K562 (cell line): ENCODE measurements at regions of chr7 and their contacts with region 1.

Region 1: GRCh38 chr7:130242198-130243014 is 24.3 kb upstream of the CPA2 start:
- DNase-seq: peak; percentile 66 to 81 (median 76)
- ATAC-seq: peak; percentile 100
- H3K4me3 ChIP-seq: no peak overlapping the region
- H3K27ac ChIP-seq: no peak overlapping the region
- H3K4me1 ChIP-seq: peaks cover 0 to 10% of the 10 kb centered on the region in 2 experiments; a peak in 2 of 5 replicates
- H3K27me3 ChIP-seq: 0 out of 5 replicates have a peak, but pooled peaks cover 0 to 3% of the 10 kb centered on the region in 2 experiments
- CTCF ChIP-seq: peak; percentile 94 to 97 (median 96)
- EP300 ChIP-seq: peak; percentile 48; the same call in 1 of the 2 replicates
- POLR2A ChIP-seq: no peak
- RAD21 ChIP-seq: peak; percentile 73 to 96

Region 2: DNA sequence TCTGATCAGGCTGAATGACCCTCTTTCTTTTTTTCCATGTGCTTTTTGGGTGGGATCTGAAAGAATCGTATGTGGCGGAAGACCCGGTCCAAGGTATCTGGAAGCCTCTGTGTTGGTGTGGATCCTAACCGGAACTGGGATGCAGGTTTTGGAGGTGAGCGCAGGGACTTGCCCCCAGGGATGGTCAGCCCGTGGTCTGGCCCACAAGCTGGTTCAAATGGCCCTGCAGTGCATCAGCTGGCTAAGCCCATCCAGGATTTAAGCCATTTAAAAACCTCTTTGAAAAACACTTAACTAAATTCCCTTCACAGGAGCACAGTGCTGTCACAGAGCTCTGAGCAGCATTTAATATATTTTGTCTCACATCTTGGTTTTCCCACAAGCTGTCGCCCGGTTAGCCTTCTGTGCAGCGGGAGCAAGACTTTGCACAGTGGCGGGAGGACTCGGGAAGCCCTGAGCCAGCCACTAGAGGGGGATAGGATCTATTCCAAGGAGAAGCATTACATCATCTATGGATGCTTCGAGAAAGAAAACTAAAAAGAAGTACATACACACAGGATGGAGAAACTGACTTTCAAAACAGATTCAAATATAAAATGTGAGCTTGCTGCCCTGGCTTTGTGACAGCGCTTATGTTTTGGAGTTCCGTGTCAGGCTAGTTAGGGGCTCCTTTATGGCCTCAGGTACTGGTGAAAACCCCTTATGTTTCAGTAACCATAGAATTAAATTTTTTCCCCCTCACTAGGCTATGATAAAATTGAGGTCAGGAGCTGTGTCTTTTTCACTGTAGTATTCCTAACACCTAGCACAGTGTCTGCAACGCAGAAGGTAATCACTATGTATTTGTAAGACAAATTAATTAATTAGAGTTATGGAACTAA is 35.6 kb after region 1 on chr7:
- CTCF ChIA-PET with region 1: no interaction called
- POLR2A ChIA-PET with region 1: no interaction called
- in situ Hi-C with region 1: no loop called
- intact Hi-C with region 1: no loop called
- DNase-seq: peak in 3 of 4 experiments; percentile 46 to 69 (median 59)
- ATAC-seq: peak; percentile 96
- H3K4me3 ChIP-seq: no peak overlapping the region
- H3K27ac ChIP-seq: no peak overlapping the region
- H3K4me1 ChIP-seq: peaks cover 1 to 3% of the 10 kb centered on the region in 2 experiments; a peak in 2 of 5 replicates
- H3K27me3 ChIP-seq: peaks cover 24 to 26% of the 10 kb centered on the region in 2 experiments
- CTCF ChIP-seq: peak; percentile 64 to 84 (median 76)
- EP300 ChIP-seq: no peak
- POLR2A ChIP-seq: no peak
- RAD21 ChIP-seq: peak; percentile 58 to 82

Region 3: GRCh38 chr7:130352221-130353075 is 110.0 kb after region 1 on chr7:
- CTCF ChIA-PET with region 1: no interaction called
- POLR2A ChIA-PET with region 1: no interaction called
- in situ Hi-C with region 1: no loop called
- intact Hi-C with region 1: no loop called
- DNase-seq: no peak
- ATAC-seq: no peak
- H3K4me3 ChIP-seq: no peak overlapping the region
- H3K27ac ChIP-seq: no peak overlapping the region
- H3K4me1 ChIP-seq: peaks cover 0 to 2% of the 10 kb centered on the region in 2 experiments; a peak in 1 of 5 replicates
- H3K27me3 ChIP-seq: peaks cover 38 to 74% of the 10 kb centered on the region in 2 experiments
- CTCF ChIP-seq: no peak
- EP300 ChIP-seq: no peak
- POLR2A ChIP-seq: no peak
- RAD21 ChIP-seq: no peak

Region 4: GRCh38 chr7:130486114-130486958 is 243.9 kb after region 1 on chr7:
- CTCF ChIA-PET with region 1: no interaction called
- POLR2A ChIA-PET with region 1: no interaction called
- in situ Hi-C with region 1: no loop called
- intact Hi-C with region 1: loop called (anchors 10 kb)
- DNase-seq: peak; percentile 31 to 58 (median 46)
- ATAC-seq: peak; percentile 81
- H3K4me3 ChIP-seq: no peak overlapping the region
- H3K27ac ChIP-seq: no peak overlapping the region
- H3K4me1 ChIP-seq: peaks cover 0 to 13% of the 10 kb centered on the region in 2 experiments; a peak in 3 of 5 replicates
- H3K27me3 ChIP-seq: peaks cover 17 to 52% of the 10 kb centered on the region in 2 experiments; a peak in 4 of 5 replicates
- CTCF ChIP-seq: peak; percentile 73 to 85 (median 80)
- EP300 ChIP-seq: no peak
- POLR2A ChIP-seq: no peak
- RAD21 ChIP-seq: peak; percentile 28 to 73; a peak in 3 of 4 replicates

Region 5: GRCh38 chr7:130566898-130567280 is 324.5 kb after region 1 on chr7:
- CTCF ChIA-PET with region 1: no interaction called
- POLR2A ChIA-PET with region 1: no interaction called
- in situ Hi-C with region 1: no loop called
- intact Hi-C with region 1: no loop called
- DNase-seq: no peak
- ATAC-seq: no peak
- H3K4me3 ChIP-seq: no peak overlapping the region
- H3K27ac ChIP-seq: no peak overlapping the region
- H3K4me1 ChIP-seq: peaks cover 0 to 3% of the 10 kb centered on the region in 2 experiments; a peak in 1 of 5 replicates
- H3K27me3 ChIP-seq: no peaks in the 10 kb centered on the region
- CTCF ChIP-seq: no peak
- EP300 ChIP-seq: no peak
- POLR2A ChIP-seq: no peak
- RAD21 ChIP-seq: no peak

Region 6: DNA sequence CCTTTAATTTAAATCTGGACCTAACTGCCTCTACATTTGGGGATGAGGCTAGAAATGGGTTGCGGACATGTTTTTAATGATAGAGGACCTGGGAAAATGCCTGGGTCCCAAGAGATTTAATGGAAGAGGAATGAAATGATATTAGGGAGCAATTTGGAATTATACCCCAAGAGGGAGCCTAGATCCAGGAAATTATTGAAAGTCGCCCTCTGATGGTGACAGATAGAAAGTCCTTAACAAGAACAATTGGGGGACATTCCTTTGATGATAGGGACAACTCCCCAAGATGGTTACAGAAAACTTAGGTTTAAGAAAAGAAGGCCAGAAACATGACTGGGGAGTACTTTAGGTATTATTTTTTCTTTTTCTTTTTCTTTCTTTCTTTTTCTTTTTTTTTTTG is 453.4 kb after region 1 on chr7:
- CTCF ChIA-PET with region 1: no interaction called
- POLR2A ChIA-PET with region 1: interaction called, 3 read pairs
- in situ Hi-C with region 1: no loop called
- intact Hi-C with region 1: loop called (anchors 5 kb)
- DNase-seq: peak; percentile 36 to 62 (median 50)
- ATAC-seq: peak; percentile 80
- H3K4me3 ChIP-seq: no peak overlapping the region
- H3K27ac ChIP-seq: no peak overlapping the region
- H3K4me1 ChIP-seq: no peaks in the 10 kb centered on the region
- H3K27me3 ChIP-seq: peaks cover 0 to 4% of the 10 kb centered on the region in 2 experiments; a peak in 2 of 5 replicates
- CTCF ChIP-seq: peak; percentile 76 to 99 (median 99)
- EP300 ChIP-seq: no peak
- POLR2A ChIP-seq: no peak
- RAD21 ChIP-seq: peak; percentile 61 to 77

Region 7: DNA sequence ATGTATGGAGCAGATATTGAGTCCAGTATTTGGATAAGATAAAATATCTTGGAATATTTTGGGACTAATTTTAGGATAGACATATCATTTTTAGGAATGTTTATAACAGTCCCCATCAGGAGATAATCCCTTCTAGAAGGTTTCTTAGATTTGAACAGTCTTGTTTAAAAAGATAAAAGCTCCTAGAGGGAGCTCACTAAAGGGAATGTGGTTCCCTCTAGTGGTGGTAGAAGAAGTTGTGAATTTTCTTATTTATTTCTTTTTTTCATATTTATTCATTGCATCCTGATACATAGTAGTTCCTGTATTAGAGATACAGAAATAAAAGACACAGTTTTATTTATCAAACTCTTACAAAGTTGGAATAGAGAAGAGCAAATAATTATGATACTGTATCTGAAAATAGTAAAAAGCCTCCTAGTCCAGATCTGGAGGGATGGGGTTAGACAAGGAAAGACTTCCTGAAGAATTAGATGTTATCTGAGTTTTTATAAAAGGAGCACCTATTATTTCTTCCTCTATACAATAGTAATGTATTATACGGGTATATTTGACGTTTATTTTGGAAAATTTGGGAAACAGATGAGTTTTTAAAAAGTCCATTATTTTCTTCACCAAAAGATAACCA is 516.1 kb after region 1 on chr7:
- CTCF ChIA-PET with region 1: no interaction called
- POLR2A ChIA-PET with region 1: no interaction called
- in situ Hi-C with region 1: no loop called
- intact Hi-C with region 1: loop called (anchors 2 kb)
- DNase-seq: peak; percentile 60 to 73 (median 64)
- ATAC-seq: peak; percentile 75
- H3K4me3 ChIP-seq: no peak overlapping the region
- H3K27ac ChIP-seq: no peak overlapping the region
- H3K4me1 ChIP-seq: no peaks in the 10 kb centered on the region
- H3K27me3 ChIP-seq: peaks cover 8 to 18% of the 10 kb centered on the region in 2 experiments
- CTCF ChIP-seq: peak in 2 of 3 experiments; percentile 65 to 95; a peak in 4 of 6 replicates
- EP300 ChIP-seq: no peak
- POLR2A ChIP-seq: no peak
- RAD21 ChIP-seq: peak; percentile 83 to 90